Left colon (tissue), 2 donors: ENCODE measurements at regions of chr10 and their contacts with region 1.

Region 1: GRCh38 chr10:31707093-31708039 is 221.3 kb downstream of the ARHGAP12 start:
- DNase-seq: peak; percentile 42 to 53
- ATAC-seq: peak; percentile 42

Region 2: DNA sequence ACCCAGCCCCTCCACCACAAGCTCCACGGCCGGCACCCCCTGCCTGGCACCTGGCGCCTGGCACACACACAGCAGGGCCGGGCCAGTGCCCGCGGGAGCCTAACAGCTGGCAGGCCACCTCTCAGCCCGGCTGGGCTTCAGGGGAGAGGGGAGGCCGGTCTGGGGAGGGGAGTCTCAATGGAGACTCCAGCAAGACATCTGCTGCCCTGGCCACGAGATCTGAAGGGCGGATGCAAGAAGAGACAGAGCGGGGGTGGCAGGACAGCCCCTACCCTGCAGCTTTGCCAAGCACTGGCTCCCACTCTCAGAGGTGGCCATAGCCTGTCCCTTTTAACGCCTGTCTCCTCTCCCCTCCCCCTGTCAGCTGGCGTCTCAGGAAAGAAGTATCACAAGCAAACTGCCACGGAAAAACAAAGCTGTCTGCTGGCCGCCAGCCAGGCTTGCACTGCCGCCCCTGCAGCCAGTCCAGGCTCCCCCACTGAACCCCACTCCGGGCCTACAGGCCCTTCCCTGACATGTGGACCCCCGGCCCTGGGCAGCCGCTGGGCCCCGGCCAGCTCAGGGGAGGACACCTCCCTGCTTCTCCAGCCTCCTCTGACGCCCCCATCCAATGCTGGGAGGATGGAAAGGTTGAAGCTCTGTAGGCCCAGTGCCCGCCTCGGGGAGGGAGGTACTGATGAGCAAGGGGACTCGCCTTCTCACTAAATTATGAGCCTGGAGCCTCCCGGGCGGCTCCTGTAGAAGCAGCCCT is 42.8 kb after region 1 on chr10:
- intact Hi-C with region 1: loop called in 1 of 2 experiments (anchors 5 kb)
- DNase-seq: peak in 1 of 2 donors; percentile 44
- ATAC-seq: peak; percentile 32

Region 3: GRCh38 chr10:31994926-31995325 is 287.6 kb after region 1 on chr10:
- intact Hi-C with region 1: no loop called
- DNase-seq: no peak
- ATAC-seq: no peak

Region 4: GRCh38 chr10:32095116-32095733 is 387.9 kb after region 1 on chr10:
- intact Hi-C with region 1: no loop called
- DNase-seq: peak in 1 of 2 donors; percentile 31
- ATAC-seq: peak; percentile 88